ENCODE measurements at regions of chr18 and their contacts with region 1.

Region 1: GRCh38 chr18:267688-268552 is at the start of gene THOC1:
- DNase-seq: peak; percentile 98
- H3K4me3 Mint-ChIP-seq: peak within 1 kb of the TSS; percentile 100
- H3K27ac Mint-ChIP-seq: peak within 1 kb of the TSS; percentile 100
- H3K4me1 Mint-ChIP-seq: peaks cover 34% of the 10 kb centered on the region
- H3K27me3 Mint-ChIP-seq: no peaks in the 10 kb centered on the region
- total RNA-seq, gene THOC1: 71.2 and 78.9 TPM in 2 replicates

Region 2: DNA sequence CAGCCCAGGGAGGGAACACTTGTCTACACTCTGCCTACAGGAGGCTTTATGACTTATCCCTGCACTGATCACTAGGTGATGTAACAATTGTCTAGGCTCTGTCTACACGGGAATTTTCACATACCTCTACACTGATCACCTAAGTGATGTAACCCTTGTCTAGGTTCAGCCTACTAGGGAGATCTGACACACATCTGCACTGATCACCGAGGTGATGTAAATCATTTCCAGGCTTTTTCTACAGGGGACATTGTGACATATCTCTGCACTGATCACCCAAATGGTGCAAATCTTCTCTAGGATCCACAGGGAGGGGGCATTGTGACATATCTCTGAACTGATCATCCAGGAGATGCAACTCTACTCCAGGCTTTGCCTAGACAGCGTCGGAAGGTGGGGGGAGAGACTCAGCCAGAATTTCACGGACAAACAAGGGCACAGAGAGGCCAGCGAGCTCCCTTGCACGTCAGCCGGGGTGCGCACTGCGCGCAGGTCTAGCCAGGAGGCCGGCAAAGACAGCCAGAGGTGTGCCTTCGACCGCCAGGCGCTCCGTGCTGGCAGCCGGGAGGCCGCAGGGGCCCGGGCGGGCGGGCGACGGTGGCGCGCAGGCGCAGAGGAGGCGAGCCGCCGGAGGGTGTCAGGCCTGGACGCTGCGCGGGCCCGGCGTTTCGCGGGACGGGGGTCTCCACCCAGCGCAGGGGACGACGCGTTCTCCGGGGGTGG is 156.5 kb before region 1 on chr18:
- intact Hi-C with region 1: loop called (anchors 5 kb)
- DNase-seq: peak; percentile 92
- H3K4me3 Mint-ChIP-seq: peak overlapping the region; percentile 81
- H3K27ac Mint-ChIP-seq: peak overlapping the region; percentile 87
- H3K4me1 Mint-ChIP-seq: peaks cover 9% of the 10 kb centered on the region
- H3K27me3 Mint-ChIP-seq: peaks cover 7% of the 10 kb centered on the region

Region 3: GRCh38 chr18:158128-159036 is 109.5 kb before region 1 on chr18 and contains the start of gene USP14:
- intact Hi-C with region 1: loop called (anchors 1 kb)
- DNase-seq: peak; percentile 99
- H3K4me3 Mint-ChIP-seq: peak within 1 kb of the TSS; percentile 96
- H3K27ac Mint-ChIP-seq: peak within 1 kb of the TSS; percentile 93
- H3K4me1 Mint-ChIP-seq: peaks cover 16% of the 10 kb centered on the region
- H3K27me3 Mint-ChIP-seq: no peaks in the 10 kb centered on the region
- total RNA-seq, gene USP14: 97.9 and 103 TPM in 2 replicates

Region 4: DNA sequence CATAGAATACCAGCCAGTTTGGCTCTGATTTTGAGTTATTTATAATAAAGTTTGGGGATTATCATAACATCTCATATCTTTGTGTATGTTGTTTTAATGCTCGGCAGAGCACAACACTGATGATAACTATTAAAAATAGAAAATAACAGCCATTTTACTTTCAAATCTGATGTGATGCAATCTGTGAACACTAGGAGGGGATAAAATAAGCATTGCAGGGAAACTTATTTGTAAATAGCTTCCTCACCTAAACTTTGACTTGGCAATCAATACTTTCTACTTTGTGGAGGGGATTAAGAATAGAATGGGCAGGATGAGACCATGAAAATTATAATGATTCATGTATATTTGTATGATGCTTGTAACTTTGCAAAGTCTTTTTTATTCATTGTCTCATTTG is 55.1 kb before region 1 on chr18:
- intact Hi-C with region 1: loop called (anchors 5 kb)
- DNase-seq: no peak
- H3K4me3 Mint-ChIP-seq: no peak overlapping the region
- H3K27ac Mint-ChIP-seq: no peak overlapping the region
- H3K4me1 Mint-ChIP-seq: peaks cover 4% of the 10 kb centered on the region
- H3K27me3 Mint-ChIP-seq: no peaks in the 10 kb centered on the region

Region 5: DNA sequence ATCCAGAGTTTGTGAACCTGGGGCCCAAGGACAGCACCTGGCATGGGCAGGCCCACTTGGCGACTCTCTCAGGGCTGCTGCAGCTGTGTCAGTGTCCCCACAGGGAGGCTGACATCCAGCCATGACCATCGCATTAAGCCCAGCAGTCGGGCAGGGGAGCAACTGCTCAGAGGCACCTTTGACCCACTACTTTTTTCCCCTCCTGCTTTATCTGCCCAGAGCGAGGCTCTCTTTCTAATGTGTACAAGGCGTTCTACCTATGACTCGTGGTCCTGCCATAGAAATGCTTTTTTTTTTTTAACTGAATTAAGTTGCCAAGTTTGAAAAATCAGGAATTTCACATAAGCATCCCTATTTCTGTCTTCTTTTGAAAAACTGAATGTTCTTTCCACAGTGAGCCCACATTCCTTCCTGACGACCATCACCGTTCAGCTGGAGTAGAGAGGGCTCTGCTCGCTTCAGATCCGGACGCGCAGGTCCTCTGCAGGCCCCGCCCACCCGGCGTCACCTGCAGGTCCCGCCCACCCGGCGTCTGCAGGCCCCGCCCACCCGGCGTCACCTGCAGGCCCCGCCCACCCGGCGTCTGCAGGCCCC is 328.5 kb after region 1 on chr18:
- intact Hi-C with region 1: loop called (anchors 1 kb)
- DNase-seq: peak; percentile 57
- H3K4me3 Mint-ChIP-seq: no peak overlapping the region
- H3K27ac Mint-ChIP-seq: no peak overlapping the region
- H3K4me1 Mint-ChIP-seq: peaks cover 8% of the 10 kb centered on the region
- H3K27me3 Mint-ChIP-seq: peaks cover 34% of the 10 kb centered on the region

Region 6: DNA sequence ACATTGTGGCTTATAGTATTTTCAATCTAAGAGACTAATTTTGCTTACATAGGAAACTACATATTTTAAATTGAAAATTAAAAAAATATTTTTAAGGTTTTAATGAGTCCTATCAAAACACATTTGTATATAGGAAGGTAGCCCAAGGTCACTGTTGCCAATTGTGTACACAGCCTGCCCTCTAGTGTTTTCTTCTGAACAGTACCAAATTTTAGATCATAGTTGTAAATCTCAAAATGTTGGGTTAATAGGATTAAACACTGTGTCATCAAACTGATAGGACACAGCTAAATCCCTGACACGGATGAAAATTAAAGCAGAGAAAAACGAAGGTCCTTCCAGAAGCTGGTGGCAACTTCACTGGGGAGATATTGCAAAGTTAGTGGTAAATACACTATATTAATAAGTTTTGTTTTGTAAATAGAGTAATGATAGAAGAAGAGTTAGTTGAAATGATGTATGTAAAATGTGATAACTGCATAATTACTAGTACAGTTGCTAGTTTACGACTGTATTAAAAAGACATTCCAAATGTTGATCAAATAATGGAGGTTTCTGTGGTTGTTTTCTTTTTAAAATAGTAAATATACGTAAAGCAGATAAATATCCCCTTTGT is 348.6 kb after region 1 on chr18:
- intact Hi-C with region 1: loop called (anchors 5 kb)
- DNase-seq: peak; percentile 59
- H3K4me3 Mint-ChIP-seq: no peak overlapping the region
- H3K27ac Mint-ChIP-seq: no peak overlapping the region
- H3K4me1 Mint-ChIP-seq: no peaks in the 10 kb centered on the region
- H3K27me3 Mint-ChIP-seq: peaks cover 27% of the 10 kb centered on the region

Region 7: DNA sequence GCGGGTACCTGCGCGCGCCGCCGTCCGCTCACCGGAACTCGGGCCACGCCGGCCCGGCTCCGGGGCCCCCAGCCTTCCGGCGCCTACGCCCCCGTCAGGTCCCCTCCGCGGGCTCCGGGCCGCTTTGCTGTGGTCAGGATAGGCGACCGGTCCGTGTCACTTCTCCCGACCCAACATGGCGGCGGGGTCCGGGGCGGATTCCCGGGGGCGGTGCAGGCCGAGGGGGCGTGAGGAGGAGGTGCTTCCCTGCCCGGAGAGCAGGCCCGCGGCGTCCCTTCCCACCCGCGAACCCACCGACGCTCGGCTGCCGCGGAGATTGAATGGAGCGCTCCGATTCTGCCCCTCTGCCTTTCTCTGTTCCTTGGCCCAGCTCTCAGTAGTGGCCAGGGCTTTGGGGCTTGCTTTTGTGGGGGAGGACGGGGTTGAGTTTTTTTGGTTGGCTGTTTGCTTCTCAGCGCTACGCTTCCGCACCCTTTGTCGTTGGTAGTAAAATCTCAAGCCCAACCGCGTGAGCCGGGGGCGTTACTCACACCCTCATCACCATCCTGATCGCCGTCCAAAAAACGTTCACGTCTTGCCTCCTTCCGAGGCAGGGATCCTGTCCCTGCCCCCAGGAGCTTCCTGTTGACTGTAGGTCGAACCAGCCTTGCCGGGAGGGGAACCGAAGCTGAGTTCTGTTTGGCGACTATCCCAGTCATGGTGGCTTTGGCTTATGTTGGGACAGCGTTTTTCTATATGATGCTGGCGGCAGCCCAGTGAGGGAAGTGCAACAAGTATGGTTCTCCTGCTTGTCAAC is 544.7 kb after region 1 on chr18:
- intact Hi-C with region 1: loop called (anchors 2 kb)
- DNase-seq: peak; percentile 95
- H3K4me3 Mint-ChIP-seq: peak overlapping the region; percentile 97
- H3K27ac Mint-ChIP-seq: peak overlapping the region; percentile 100
- H3K4me1 Mint-ChIP-seq: peaks cover 65% of the 10 kb centered on the region
- H3K27me3 Mint-ChIP-seq: peaks cover 3% of the 10 kb centered on the region

Measured in activated CD4-positive, alpha-beta T cell treated with anti-CD3 and anti-CD28 coated beads, Interleukin-2, amount 10 ng/mL, durations not matched to agents 24 days and 14 days (primary cell).